ENCODE measurements at regions of chr17 and their contacts with region 1.

Region 1: GRCh38 chr17:8162233-8162996 is at the start of gene VAMP2:
- DNase-seq: peak; percentile 66 to 97 (median 82)

Region 2: DNA sequence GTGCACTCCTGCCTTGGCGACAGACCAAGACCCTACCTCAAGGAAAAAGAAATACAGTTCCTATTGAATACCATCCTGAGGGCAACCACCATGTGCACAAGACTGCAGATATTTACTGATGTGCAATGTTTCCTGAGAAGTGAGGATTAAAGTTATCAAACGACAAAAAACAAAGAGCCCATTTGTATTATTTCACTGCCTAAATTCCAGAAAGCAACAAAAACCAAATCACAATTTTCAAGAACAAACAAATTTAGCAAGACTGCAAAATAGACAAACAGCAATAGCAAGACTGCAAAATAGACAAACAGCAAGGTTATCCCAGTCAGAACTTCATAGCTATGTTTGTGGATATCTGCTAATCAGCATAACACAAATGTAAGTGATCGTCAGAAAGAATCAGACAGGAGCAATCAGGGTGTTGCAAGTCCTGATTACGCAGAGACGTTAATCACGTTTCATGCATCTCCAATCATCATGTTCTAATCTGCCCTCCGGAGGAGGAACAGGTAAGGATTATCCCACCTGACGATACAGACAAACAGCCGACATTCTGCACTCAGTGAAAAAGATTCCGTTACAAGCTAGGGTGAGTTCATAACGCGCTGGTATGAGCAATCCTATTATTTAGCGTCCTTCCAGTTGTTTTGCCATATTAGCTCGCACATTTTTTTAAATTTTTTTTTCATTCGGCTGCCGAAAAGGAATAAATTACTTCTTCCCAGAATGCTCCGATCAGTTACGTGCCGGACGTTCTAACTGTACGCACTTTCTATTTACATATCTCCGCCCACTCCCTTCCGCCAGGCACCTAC is 10.8 kb after region 1 on chr17:
- intact Hi-C with region 1: loop called (anchors 1 kb)
- DNase-seq: peak in 9 of 10 donors; percentile 62 to 96 (median 79)

Region 3: GRCh38 chr17:8186787-8187516 is 24.5 kb after region 1 on chr17:
- intact Hi-C with region 1: loop called (anchors 2 kb)
- DNase-seq: peak; percentile 86 to 99 (median 91)

Measured in posterior cingulate gyrus (tissue), 11 donors.